CD14-positive monocyte (primary cell): ENCODE measurements at regions of chr3 and their contacts with region 1.

Region 1: GRCh38 chr3:187745201-187746058 is at the start of gene BCL6:
- DNase-seq: peak; percentile 95 to 98 (median 97)
- H3K4me3 ChIP-seq: peak within 1 kb of the TSS; percentile 68 to 96 (median 80)
- H3K4me3 Mint-ChIP-seq: peak within 1 kb of the TSS; percentile 95 to 100
- H3K27ac ChIP-seq: peak within 1 kb of the TSS; percentile 96 to 99
- H3K27ac Mint-ChIP-seq: peak within 1 kb of the TSS; percentile 99 to 100 (median 100)
- H3K4me1 ChIP-seq: peaks cover 33 to 58% of the 10 kb centered on the region in 2 donors
- H3K4me1 Mint-ChIP-seq: peaks cover 40% of the 10 kb centered on the region
- H3K27me3 ChIP-seq: no peaks in the 10 kb centered on the region
- H3K27me3 Mint-ChIP-seq: peaks cover 0 to 3% (median 0%) of the 10 kb centered on the region in 3 donors
- CTCF ChIP-seq: no peak
- polyA plus RNA-seq, gene BCL6: 33.2 to 349 (median 34.9) TPM

Region 2: GRCh38 chr3:187788984-187789857 is 43.8 kb after region 1 on chr3:
- intact Hi-C with region 1: loop called in 1 of 2 experiments (anchors 5 kb)
- DNase-seq: no peak
- H3K4me3 ChIP-seq: no peak overlapping the region
- H3K4me3 Mint-ChIP-seq: no peak overlapping the region
- H3K27ac ChIP-seq: peak overlapping the region in 1 of 2 donors; percentile 45
- H3K27ac Mint-ChIP-seq: peak overlapping the region in 4 of 7 donors; percentile 20 to 69 (median 40)
- H3K4me1 ChIP-seq: peaks cover 17% of the 10 kb centered on the region in 2 donors
- H3K4me1 Mint-ChIP-seq: peaks cover 27% of the 10 kb centered on the region
- H3K27me3 ChIP-seq: no peaks in the 10 kb centered on the region
- H3K27me3 Mint-ChIP-seq: peaks cover 0 to 2% (median 0%) of the 10 kb centered on the region in 3 donors
- CTCF ChIP-seq: no peak

Region 3: GRCh38 chr3:187919048-187919447 is 173.6 kb after region 1 on chr3:
- intact Hi-C with region 1: loop called (anchors 5 kb)
- DNase-seq: peak; percentile 73 to 91 (median 86)
- H3K4me3 ChIP-seq: peak overlapping the region in 2 of 3 experiments; percentile 25 to 69
- H3K4me3 Mint-ChIP-seq: peak overlapping the region; percentile 63 to 75
- H3K27ac ChIP-seq: peak overlapping the region; percentile 30 to 94
- H3K27ac Mint-ChIP-seq: peak overlapping the region; percentile 94 to 98 (median 95)
- H3K4me1 ChIP-seq: peaks cover 66 to 71% of the 10 kb centered on the region in 2 donors
- H3K4me1 Mint-ChIP-seq: peaks cover 73% of the 10 kb centered on the region
- H3K27me3 ChIP-seq: no peaks in the 10 kb centered on the region
- H3K27me3 Mint-ChIP-seq: no peaks in the 10 kb centered on the region
- CTCF ChIP-seq: no peak

Region 4: DNA sequence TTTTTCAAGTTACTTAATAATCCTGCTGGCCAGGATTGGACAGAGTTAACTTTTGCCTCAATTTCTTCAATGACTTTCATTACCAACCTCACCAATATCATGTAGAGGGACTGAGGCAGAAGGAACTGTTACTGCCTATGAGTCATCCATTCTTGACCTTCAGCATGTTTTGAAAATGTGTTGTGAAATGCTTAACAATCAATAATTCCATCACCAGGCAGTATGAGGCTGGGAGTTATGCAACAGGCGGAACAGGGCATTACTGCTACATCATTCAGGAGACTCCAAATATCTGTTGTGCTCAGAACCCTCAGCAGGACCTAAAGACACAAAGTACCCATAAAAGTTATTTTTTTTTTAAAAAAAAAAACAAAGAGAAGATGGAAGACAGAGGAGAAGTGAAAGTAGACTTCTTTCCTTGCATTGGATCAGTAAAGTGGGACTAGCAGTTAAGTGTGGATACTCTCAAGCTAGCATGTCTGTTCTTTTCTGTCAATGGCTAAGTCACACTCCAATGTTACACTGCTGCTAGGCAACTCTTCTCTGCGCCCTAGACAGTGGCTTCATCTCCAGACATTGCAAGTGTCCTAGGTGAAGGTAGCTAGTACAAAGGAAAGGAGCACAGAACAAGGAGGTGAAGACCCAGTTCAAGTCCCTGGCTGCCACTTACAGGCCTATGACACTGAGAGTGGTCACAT is 223.6 kb after region 1 on chr3:
- intact Hi-C with region 1: loop called in 1 of 2 experiments (anchors 5 kb)
- DNase-seq: peak; percentile 81 to 95 (median 93)
- H3K4me3 ChIP-seq: no peak overlapping the region
- H3K4me3 Mint-ChIP-seq: no peak overlapping the region
- H3K27ac ChIP-seq: peak overlapping the region; percentile 64 to 78
- H3K27ac Mint-ChIP-seq: peak overlapping the region; percentile 62 to 98 (median 90)
- H3K4me1 ChIP-seq: peaks cover 57 to 59% of the 10 kb centered on the region in 2 donors
- H3K4me1 Mint-ChIP-seq: peaks cover 51% of the 10 kb centered on the region
- H3K27me3 ChIP-seq: no peaks in the 10 kb centered on the region
- H3K27me3 Mint-ChIP-seq: peaks cover 0 to 4% (median 0%) of the 10 kb centered on the region in 3 donors
- CTCF ChIP-seq: no peak

Region 5: DNA sequence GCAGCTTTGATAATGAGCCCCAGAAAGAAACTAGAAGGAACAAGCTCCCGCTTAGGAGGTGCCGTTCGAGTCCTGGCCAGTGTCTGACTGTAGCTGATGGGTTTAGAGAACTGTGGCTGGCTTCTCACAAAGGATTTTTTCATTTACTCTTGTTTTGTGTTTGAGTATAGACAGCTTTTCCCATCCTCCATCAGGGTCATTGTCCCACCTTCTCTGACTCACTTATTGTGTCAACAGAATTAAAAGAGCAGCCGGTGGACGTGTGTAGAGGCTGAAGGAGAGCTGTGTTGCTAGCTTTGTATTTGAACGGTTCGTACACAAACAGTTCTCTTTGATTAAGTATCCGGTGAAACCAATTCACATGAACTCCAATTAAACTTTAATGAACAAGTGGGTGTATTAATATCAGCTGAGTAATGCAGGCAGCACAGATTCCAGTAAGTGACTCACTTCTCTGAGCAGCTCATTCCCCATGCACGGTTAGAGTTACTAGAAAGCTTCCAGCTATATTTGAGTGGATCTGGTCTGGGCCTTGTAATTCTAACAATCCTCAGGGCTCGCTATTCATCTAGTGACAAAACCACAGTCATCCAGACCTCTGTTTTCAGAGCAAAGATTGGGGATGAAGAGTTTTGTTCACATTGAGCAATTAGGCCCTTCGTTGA is 549.5 kb after region 1 on chr3:
- intact Hi-C with region 1: loop called in 1 of 2 experiments (anchors 10 kb)
- DNase-seq: peak in 1 of 3 donors; percentile 38
- H3K4me3 ChIP-seq: no peak overlapping the region
- H3K4me3 Mint-ChIP-seq: no peak overlapping the region
- H3K27ac ChIP-seq: no peak overlapping the region
- H3K27ac Mint-ChIP-seq: peak overlapping the region; percentile 28 to 79 (median 61)
- H3K4me1 ChIP-seq: peaks cover 58 to 74% of the 10 kb centered on the region in 2 donors
- H3K4me1 Mint-ChIP-seq: peaks cover 72% of the 10 kb centered on the region
- H3K27me3 ChIP-seq: no peaks in the 10 kb centered on the region
- H3K27me3 Mint-ChIP-seq: peaks cover 0 to 2% (median 0%) of the 10 kb centered on the region in 3 donors
- CTCF ChIP-seq: no peak

Region 6: GRCh38 chr3:188432802-188433520 is 687.5 kb after region 1 on chr3:
- intact Hi-C with region 1: loop called (anchors 2 to 5 kb)
- DNase-seq: peak; percentile 75 to 86 (median 80)
- H3K4me3 ChIP-seq: peak overlapping the region in 2 of 3 experiments; percentile 43 to 60
- H3K4me3 Mint-ChIP-seq: peak overlapping the region; percentile 60 to 80
- H3K27ac ChIP-seq: peak overlapping the region; percentile 86 to 94
- H3K27ac Mint-ChIP-seq: peak overlapping the region; percentile 98 to 100 (median 100)
- H3K4me1 ChIP-seq: peaks cover 53 to 79% of the 10 kb centered on the region in 2 donors
- H3K4me1 Mint-ChIP-seq: peaks cover 62% of the 10 kb centered on the region
- H3K27me3 ChIP-seq: no peaks in the 10 kb centered on the region
- H3K27me3 Mint-ChIP-seq: no peaks in the 10 kb centered on the region
- CTCF ChIP-seq: no peak

Region 7: DNA sequence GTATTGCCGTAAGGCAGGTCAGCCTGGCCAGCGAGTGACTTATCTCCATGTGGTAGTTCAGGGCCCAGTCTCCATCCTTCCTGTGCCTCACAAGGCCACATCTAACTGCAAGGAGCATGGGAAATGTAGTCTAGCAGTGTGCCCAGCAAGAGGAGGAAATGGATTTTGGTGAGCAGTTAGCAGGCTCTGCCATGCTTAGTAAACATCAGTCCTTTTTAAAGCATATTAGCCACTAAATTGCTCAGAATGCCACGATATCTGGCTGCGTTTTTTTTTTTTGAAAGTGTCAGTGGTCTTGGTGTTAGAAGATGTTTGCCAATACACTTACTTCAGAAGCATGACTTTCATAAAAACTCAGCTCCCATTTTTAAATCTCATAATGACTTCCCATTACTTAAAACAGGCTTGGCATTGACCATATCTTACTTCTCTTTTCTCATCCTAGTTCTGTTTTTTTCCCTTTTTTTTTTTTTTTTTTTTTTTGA is 956.1 kb after region 1 on chr3:
- intact Hi-C with region 1: loop called in 1 of 2 experiments (anchors 10 kb)
- DNase-seq: peak; percentile 72 to 87 (median 77)
- H3K4me3 ChIP-seq: peak overlapping the region in 1 of 3 experiments; percentile 53
- H3K4me3 Mint-ChIP-seq: peak overlapping the region; percentile 73 to 80
- H3K27ac ChIP-seq: peak overlapping the region; percentile 81 to 86
- H3K27ac Mint-ChIP-seq: peak overlapping the region; percentile 90 to 98 (median 97)
- H3K4me1 ChIP-seq: peaks cover 44 to 54% of the 10 kb centered on the region in 2 donors
- H3K4me1 Mint-ChIP-seq: peaks cover 49% of the 10 kb centered on the region
- H3K27me3 ChIP-seq: no peaks in the 10 kb centered on the region
- H3K27me3 Mint-ChIP-seq: peaks cover 0 to 2% (median 0%) of the 10 kb centered on the region in 3 donors
- CTCF ChIP-seq: no peak